Heart left ventricle (tissue), 16 donors: ENCODE measurements at regions of chr22 and their contacts with region 1.

Region 1: DNA sequence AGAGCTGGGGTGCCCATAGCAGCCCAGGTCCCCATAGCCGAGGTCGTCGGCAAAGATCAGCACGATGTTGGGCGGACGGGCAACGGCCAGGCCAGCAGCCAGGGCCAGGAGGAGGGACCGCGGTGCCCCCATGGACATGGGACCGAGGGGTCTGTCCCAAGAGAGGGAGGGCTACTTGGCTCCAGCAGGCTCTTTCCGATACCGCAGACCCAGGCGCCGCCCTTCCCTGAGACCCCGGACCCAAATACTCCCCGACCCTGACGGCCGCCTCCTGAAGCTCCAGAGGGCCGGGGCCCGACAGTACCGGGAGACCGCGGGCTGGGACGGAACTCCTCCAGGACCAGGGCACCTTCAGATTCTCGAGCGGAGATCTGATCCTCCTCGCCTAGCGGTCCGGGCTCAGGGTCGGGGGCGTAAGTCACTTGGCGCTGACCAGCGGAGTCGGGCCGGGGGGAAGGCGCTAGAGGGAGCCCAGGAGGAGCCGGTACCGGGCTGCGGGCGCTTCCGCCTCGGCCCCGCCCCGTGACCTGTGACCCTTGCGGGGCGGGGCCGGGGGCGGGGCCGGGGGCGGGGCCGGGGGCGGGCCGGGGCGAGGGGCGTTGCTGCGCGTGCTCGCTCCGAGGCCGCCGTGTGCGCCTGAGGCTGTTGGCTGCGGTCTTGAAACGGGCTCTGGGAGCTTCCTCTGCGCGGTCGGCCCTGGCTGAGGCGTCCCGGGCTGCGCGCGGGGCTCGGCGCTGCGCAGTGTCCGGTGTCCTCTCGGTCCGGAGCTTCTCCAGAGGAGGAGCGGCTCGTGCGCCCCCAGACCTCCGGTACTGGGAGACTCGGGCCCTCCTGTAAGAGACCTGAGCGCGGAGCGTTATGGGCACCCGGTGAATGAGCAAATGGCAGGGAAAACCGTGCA is at the start of gene ARSA:
- DNase-seq: peak; percentile 87 to 94 (median 88)
- ATAC-seq: peak; percentile 77 to 93 (median 90)
- H3K4me3 ChIP-seq: peak within 1 kb of the TSS; percentile 61 to 92 (median 82)
- H3K27ac ChIP-seq: peak within 1 kb of the TSS; percentile 70 to 93 (median 87)
- H3K4me1 ChIP-seq: peaks cover 0 to 27% (median 17%) of the 10 kb centered on the region in 12 donors
- H3K27me3 ChIP-seq: no peaks in the 10 kb centered on the region
- CTCF ChIP-seq: peak in 11 of 12 donors; percentile 16 to 65 (median 49)
- POLR2A ChIP-seq: peak in 1 of 2 donors; percentile 74
- total RNA-seq, gene ARSA: 19.1 to 40.5 (median 27.2) TPM

Region 2: GRCh38 chr22:50691521-50691920 is 63.6 kb after region 1 on chr22:
- intact Hi-C with region 1: loop called in 5 of 10 experiments (anchors 2 to 5 kb)
- DNase-seq: no peak
- ATAC-seq: no peak
- H3K4me3 ChIP-seq: no peak overlapping the region
- H3K27ac ChIP-seq: no peak overlapping the region
- H3K4me1 ChIP-seq: peaks cover 2 to 64% (median 17%) of the 10 kb centered on the region in 12 donors
- H3K27me3 ChIP-seq: peaks cover 0 to 13% (median 0%) of the 10 kb centered on the region in 9 donors
- CTCF ChIP-seq: peak; percentile 7 to 51 (median 30)
- POLR2A ChIP-seq: no peak

Region 3: DNA sequence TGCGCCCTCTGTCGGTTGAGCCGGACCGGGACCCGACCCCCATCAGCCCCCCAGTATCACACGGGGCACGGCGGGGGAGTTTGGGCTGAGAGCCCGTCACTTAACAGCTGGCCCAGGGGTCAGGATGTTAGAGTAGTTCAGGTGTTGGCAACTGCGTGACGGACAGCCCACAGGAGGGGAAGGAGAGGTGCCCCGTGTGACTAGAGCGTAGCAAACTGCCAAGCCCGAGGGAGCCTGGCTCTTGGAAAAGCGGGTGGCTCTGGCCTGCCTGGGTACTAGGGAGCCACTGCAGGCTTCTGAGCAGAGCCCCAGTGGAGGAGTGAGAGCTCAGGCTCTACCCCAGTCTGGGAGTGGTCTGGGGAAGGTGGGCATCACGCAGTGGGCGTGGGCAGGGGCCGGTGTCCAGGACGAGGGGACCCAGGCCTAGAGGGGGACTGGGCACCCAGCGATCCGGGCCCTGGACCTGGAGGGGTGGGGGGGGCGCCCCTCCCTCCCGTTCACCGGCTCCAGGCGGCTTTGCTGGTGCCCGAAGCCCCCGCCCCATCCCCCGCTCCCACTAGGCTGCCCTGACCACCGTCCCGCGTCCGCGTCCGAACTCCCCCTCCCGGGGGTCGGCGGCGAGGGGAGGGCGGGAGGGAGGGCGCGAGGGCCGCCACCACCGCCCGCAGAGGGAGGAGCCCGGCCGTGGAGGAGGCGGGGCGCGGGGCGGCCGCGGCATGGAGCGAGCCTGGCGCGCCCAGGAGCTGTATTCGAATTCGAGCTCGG is 69.1 kb after region 1 on chr22:
- intact Hi-C with region 1: loop called in 7 of 10 experiments (anchors 2 to 5 kb)
- DNase-seq: peak in 3 of 5 donors; percentile 30 to 62 (median 30)
- ATAC-seq: peak in 2 of 4 donors; percentile 33 to 66
- H3K4me3 ChIP-seq: peak overlapping the region; percentile 15 to 61 (median 47)
- H3K27ac ChIP-seq: peak overlapping the region in 3 of 12 donors; percentile 19 to 37 (median 33)
- H3K4me1 ChIP-seq: peaks cover 4 to 90% (median 36%) of the 10 kb centered on the region in 12 donors
- H3K27me3 ChIP-seq: no peaks in the 10 kb centered on the region
- CTCF ChIP-seq: peak in 9 of 12 donors; percentile 31 to 57 (median 48)
- POLR2A ChIP-seq: no peak

Region 4: DNA sequence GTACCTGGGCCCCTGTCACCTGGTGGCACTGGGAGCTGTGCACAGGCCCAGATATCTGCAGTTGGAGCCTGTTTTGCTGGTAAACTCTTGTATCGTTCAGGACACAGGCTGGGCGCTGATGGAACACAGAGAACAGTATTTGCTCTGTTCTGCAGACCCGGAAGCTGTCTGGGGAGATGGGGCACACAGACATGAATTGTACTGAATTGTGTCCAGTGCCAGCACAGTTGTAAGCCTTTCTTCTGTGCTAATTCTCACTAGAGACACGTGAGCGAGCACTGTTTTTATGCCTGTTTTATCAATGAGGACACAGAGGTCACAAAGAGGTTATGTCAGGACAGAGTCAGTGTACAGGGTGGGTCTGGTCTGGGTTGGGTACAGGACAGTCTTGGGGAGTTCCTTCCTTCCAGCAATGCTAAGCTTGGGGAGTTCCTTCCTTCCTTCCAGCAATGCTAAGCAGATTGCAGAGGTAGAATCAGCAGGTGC is 85.7 kb after region 1 on chr22:
- intact Hi-C with region 1: loop called in 1 of 10 experiments (anchors 5 kb)
- DNase-seq: peak in 3 of 5 donors; percentile 11 to 44 (median 28)
- ATAC-seq: peak; percentile 66 to 76 (median 67)
- H3K4me3 ChIP-seq: no peak overlapping the region
- H3K27ac ChIP-seq: peak overlapping the region in 5 of 12 donors; percentile 8 to 68 (median 31)
- H3K4me1 ChIP-seq: peaks cover 0 to 55% (median 27%) of the 10 kb centered on the region in 12 donors
- H3K27me3 ChIP-seq: no peaks in the 10 kb centered on the region
- CTCF ChIP-seq: no peak
- POLR2A ChIP-seq: no peak